Activated CD4-positive, alpha-beta T cell treated with anti-CD3 and anti-CD28 coated beads, Interleukin-2, amount 10 ng/mL, durations not matched to agents 7 days and 5 days (primary cell): ENCODE measurements at regions of chr20 and their contacts with region 1.

Region 1: DNA sequence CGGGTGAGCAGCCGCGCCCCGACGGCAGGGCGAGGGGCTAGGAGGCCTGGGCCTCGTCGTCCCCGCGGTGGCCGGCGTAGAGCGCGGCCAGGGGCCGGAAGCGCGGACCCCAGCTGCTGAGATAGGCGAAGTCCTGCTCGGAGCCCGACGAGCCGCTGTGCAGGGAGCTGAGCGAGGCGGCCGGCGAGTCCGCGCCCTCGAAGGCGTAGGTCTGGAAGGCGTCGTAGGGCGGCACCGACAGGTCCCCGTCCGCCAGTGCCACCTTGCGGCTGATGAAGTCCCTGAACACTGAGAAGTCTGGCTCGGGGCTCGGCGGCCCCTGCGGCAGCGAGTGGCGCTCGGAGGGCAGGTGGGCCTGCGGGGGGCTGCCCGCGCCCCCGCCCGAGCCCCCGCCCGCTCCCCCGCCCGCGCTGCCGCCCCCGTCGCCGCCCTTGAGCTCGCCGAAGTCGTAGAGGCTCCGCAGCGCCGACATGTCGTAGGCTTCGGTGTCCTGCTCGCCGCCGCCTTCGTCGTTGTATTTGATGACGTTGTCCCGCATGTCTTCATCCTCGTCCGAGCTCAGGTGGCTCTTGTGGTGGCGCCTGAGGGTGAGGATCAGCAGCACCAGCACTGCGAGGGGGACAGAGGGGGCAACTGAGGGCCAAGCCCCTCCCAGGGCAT is 56.5 kb downstream of the CD40 start:
- DNase-seq: peak; percentile 70
- H3K4me3 Mint-ChIP-seq: no peak overlapping the region
- H3K27ac Mint-ChIP-seq: no peak overlapping the region
- H3K4me1 Mint-ChIP-seq: no peaks in the 10 kb centered on the region
- H3K27me3 Mint-ChIP-seq: peaks cover 45% of the 10 kb centered on the region

Region 2: GRCh38 chr20:46186210-46186609 is 11.6 kb after region 1 on chr20:
- CTCF ChIA-PET with region 1: interaction called, 10 read pairs
- POLR2A ChIA-PET with region 1: no interaction called
- DNase-seq: no peak
- H3K4me3 Mint-ChIP-seq: no peak overlapping the region
- H3K27ac Mint-ChIP-seq: no peak overlapping the region
- H3K4me1 Mint-ChIP-seq: no peaks in the 10 kb centered on the region
- H3K27me3 Mint-ChIP-seq: peaks cover 2% of the 10 kb centered on the region